Gastrocnemius medialis (tissue), 4 donors: ENCODE measurements at regions of chr10 and their contacts with region 1.

Region 1: DNA sequence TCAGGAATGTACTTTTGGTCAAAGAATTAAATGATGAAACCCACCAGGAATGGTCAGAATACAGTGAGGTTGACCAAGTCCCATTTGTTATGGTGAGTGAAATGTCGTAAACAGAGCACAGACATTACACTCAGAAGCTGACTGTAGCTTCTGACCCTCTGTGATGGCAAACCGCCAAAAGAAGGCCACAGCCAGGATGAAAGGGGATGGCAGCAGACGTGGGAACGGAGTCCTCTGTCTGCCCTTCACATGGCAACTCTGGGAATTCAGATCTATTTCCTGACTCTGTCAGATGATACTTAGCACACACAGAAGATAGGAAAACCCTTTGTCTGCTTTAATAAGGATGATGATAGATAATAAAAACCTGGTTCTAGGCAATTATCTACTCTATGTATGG is 757.1 kb downstream of the SORCS3 start:
- DNase-seq: no peak
- ATAC-seq: no peak
- H3K4me3 ChIP-seq: no peak overlapping the region
- H3K27ac ChIP-seq: no peak overlapping the region
- H3K4me1 ChIP-seq: no peaks in the 10 kb centered on the region
- H3K27me3 ChIP-seq: no peaks in the 10 kb centered on the region
- CTCF ChIP-seq: no peak
- POLR2A ChIP-seq: no peak

Region 2: DNA sequence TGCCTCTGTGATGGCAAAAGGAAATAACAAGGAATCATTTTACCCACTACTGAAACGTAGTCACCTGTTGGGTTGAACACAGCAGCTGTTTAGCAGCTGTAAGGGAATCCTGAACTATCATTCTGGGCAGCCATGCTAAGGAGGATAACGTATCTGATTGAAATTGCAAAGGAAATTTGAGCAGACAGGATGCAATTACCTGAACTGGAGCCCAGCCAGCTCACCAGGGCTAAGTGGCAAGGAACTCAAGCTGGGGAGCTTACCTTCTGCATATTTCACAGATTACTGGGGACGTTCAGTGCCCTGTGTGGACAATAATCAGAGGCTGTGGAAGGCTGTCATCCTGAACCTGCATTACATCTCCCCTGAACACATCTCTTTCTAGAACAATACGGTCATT is 106.6 kb before region 1 on chr10:
- in situ Hi-C with region 1: loop called in 1 of 4 experiments (anchors 25 kb)
- intact Hi-C with region 1: no loop called
- DNase-seq: no peak
- ATAC-seq: no peak
- H3K4me3 ChIP-seq: no peak overlapping the region
- H3K27ac ChIP-seq: no peak overlapping the region
- H3K4me1 ChIP-seq: no peaks in the 10 kb centered on the region
- H3K27me3 ChIP-seq: no peaks in the 10 kb centered on the region
- CTCF ChIP-seq: no peak
- POLR2A ChIP-seq: no peak

Region 3: GRCh38 chr10:105585707-105586106 is 187.5 kb after region 1 on chr10:
- in situ Hi-C with region 1: no loop called
- intact Hi-C with region 1: no loop called
- DNase-seq: no peak
- ATAC-seq: no peak
- H3K4me3 ChIP-seq: no peak overlapping the region
- H3K27ac ChIP-seq: no peak overlapping the region
- H3K4me1 ChIP-seq: no peaks in the 10 kb centered on the region
- H3K27me3 ChIP-seq: no peaks in the 10 kb centered on the region
- CTCF ChIP-seq: no peak
- POLR2A ChIP-seq: no peak